A549 (cell line): ENCODE measurements at regions of chr1 and their contacts with region 1.

Region 1: DNA sequence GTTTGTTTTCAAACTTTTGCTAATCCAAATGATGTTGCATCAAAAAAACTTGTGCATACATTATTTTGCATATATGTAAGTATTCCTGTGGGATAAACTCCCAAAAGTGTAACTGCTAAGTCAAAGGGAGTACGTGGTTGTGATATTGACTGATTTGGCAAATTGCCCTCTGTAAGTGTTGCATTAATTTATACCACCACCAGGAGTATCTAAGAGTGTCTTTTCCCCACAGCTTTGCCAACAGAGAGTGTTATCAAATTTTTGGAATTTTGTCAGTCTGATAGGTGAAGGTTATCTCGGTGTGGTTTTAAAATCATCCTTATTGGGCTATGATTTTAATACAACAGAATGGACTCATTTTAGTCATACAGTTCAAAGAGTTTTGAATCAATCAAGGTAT is 30.1 kb upstream of the PARP1 start:
- DNase-seq: peak in 1 of 2 experiments; percentile 36
- ATAC-seq: peak in 1 of 2 experiments; percentile 69; a peak in 3 of 6 replicates
- H3K4me3 ChIP-seq: no peak overlapping the region
- H3K27ac ChIP-seq: no peak overlapping the region
- H3K4me1 ChIP-seq: no peaks in the 10 kb centered on the region
- CTCF ChIP-seq: no peak
- EP300 ChIP-seq: no peak
- POLR2A ChIP-seq: no peak
- RAD21 ChIP-seq: no peak

Region 2: GRCh38 chr1:226370144-226370923 is 67.7 kb before region 1 on chr1:
- CTCF ChIA-PET with region 1: no interaction called
- POLR2A ChIA-PET with region 1: no interaction called
- DNase-seq: no peak
- ATAC-seq: no peak
- H3K4me3 ChIP-seq: no peak overlapping the region
- H3K27ac ChIP-seq: no peak overlapping the region
- H3K4me1 ChIP-seq: no peaks in the 10 kb centered on the region
- CTCF ChIP-seq: no peak
- EP300 ChIP-seq: no peak
- POLR2A ChIP-seq: no peak
- RAD21 ChIP-seq: no peak

Region 3: DNA sequence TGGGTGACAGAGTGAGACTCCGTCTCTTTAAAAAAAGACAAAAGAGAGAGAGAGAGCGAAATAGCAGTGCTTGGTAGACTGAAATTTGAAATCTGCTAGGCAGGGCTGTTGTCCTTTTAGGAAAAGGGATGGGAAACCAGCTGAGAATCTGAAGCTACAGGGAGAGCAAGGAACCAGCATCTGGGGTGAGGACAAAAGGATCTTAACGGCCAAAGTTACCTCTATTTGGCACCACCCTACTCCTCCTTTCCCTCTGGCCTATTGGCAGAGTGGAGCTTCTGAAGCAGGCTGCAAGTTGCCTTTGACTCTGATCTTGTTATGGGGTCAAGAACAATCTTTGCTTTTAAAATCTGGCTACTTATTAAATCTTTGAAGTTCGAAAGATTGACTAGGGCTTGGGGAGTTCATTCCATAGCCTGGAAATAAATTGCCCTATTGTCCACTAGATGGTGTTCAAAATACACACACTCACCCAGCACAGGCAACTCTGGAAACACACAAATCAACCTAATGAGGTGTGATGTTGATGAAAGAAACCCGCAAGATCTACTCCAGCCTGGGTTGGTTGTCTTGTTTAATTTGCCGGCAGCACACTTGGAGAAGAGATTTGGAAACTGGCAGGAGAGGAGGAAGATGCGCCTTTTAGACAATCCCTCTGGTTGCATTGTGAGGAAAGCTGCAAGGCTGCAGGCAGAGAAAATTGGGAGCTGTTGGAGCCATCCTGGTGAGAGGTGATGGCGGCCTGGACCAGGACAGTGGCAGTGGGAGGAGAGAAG is 13.6 kb before region 1 on chr1:
- CTCF ChIA-PET with region 1: interaction called, 13 read pairs
- POLR2A ChIA-PET with region 1: no interaction called
- DNase-seq: peak; percentile 42 to 49
- ATAC-seq: peak; percentile 83 to 91; a peak in 5 of 6 replicates
- H3K4me3 ChIP-seq: no peak overlapping the region
- H3K27ac ChIP-seq: no peak overlapping the region
- H3K4me1 ChIP-seq: no peaks in the 10 kb centered on the region
- CTCF ChIP-seq: peak; percentile 68
- EP300 ChIP-seq: no peak
- POLR2A ChIP-seq: no peak
- RAD21 ChIP-seq: peak; percentile 71 to 73